A549 (cell line): ENCODE measurements at regions of chr15 and their contacts with region 1.

Region 1: GRCh38 chr15:30073915-30074314 is 8.8 kb upstream of the GOLGA8J start:
- DNase-seq: no peak
- ATAC-seq: no peak
- H3K4me3 ChIP-seq: no peak overlapping the region
- H3K27ac ChIP-seq: no peak overlapping the region
- H3K4me1 ChIP-seq: 0 out of 3 replicates have a peak, but pooled peaks cover 3% of the 10 kb centered on the region
- CTCF ChIP-seq: no peak
- EP300 ChIP-seq: no peak
- POLR2A ChIP-seq: no peak
- RAD21 ChIP-seq: no peak

Region 2: GRCh38 chr15:29613951-29614382 is 459.9 kb before region 1 on chr15:
- CTCF ChIA-PET with region 1: interaction called, 35 read pairs
- POLR2A ChIA-PET with region 1: no interaction called
- DNase-seq: peak; percentile 78 to 87
- ATAC-seq: peak; percentile 95 to 98
- H3K4me3 ChIP-seq: no peak overlapping the region
- H3K27ac ChIP-seq: peak overlapping the region in 1 of 2 experiments; percentile 27; a peak in 1 of 6 replicates
- H3K4me1 ChIP-seq: peaks cover 9% of the 10 kb centered on the region; the same call in 2 of the 3 replicates
- CTCF ChIP-seq: peak; percentile 72
- EP300 ChIP-seq: no peak
- POLR2A ChIP-seq: no peak
- RAD21 ChIP-seq: peak; percentile 81 to 86

Region 3: GRCh38 chr15:29668120-29668602 is 405.8 kb before region 1 on chr15:
- CTCF ChIA-PET with region 1: interaction called, 77 read pairs
- POLR2A ChIA-PET with region 1: no interaction called
- DNase-seq: peak; percentile 86 to 97
- ATAC-seq: peak; percentile 61 to 74
- H3K4me3 ChIP-seq: no peak overlapping the region
- H3K27ac ChIP-seq: peak overlapping the region; percentile 91 to 93
- H3K4me1 ChIP-seq: peaks cover 38% of the 10 kb centered on the region
- CTCF ChIP-seq: peak; percentile 100
- EP300 ChIP-seq: no peak
- POLR2A ChIP-seq: no peak
- RAD21 ChIP-seq: peak; percentile 99

Region 4: DNA sequence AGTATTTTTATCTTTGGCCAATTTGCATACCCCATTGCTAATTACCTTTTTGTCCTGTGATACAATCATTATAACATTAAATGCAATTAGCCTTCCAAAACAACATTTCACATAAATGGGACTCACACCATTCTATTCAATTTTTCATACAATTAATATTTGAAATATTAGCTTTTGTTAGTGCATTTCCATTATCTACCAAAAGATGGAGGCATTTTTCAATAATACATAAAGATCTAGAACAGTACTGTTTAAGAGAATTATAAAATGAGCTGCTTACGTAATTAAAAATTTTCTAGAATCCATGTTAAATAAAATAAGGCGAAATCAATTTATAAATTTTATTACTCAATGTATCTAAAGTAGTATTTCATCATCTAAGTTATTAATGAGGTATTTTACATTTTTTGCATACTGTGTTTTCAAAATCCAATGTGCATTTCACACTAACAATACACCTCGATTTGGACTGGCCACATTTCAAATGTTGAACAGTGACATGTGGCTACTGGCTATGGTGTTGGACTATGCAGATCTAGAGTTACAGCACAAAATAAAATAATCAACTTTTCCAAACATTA is 326.0 kb before region 1 on chr15:
- CTCF ChIA-PET with region 1: interaction called, 77 read pairs
- POLR2A ChIA-PET with region 1: no interaction called
- DNase-seq: peak in 1 of 2 experiments; percentile 31
- ATAC-seq: peak; percentile 44 to 58; a peak in 4 of 6 replicates
- H3K4me3 ChIP-seq: no peak overlapping the region
- H3K27ac ChIP-seq: no peak overlapping the region
- H3K4me1 ChIP-seq: peaks cover 16% of the 10 kb centered on the region; the same call in 2 of the 3 replicates
- CTCF ChIP-seq: peak; percentile 61
- EP300 ChIP-seq: no peak
- POLR2A ChIP-seq: no peak
- RAD21 ChIP-seq: peak; percentile 82 to 83

Region 5: DNA sequence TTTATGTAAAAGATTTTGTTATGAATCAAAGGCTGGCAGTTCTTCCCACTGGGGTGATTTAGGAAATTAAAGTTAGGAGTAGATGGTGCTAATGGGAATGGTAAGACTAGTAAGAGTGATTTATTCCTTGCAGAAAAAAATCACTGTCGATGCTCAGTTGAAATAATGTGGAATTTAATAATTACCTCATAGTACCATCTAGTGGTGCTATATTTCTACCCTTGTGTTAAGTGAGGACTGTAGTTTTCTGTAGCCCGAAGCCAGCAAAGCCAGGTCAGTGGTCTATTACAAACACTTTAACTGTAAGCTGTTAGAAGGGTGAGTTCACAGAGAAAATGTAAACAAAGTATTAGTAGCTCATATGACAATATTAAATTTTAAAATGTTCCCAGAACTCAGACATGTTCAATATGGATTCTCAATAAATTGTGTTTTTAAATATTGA is 30.7 kb before region 1 on chr15:
- CTCF ChIA-PET with region 1: interaction called, 19 read pairs
- POLR2A ChIA-PET with region 1: no interaction called
- DNase-seq: peak; percentile 37 to 40
- ATAC-seq: peak; percentile 76 to 85; a peak in 5 of 6 replicates
- H3K4me3 ChIP-seq: no peak overlapping the region
- H3K27ac ChIP-seq: no peak overlapping the region
- H3K4me1 ChIP-seq: peaks cover 17% of the 10 kb centered on the region; the same call in 2 of the 3 replicates
- CTCF ChIP-seq: peak; percentile 75
- EP300 ChIP-seq: no peak
- POLR2A ChIP-seq: no peak
- RAD21 ChIP-seq: peak; percentile 77 to 86